ENCODE measurements at regions of chr12 and their contacts with region 1.

Region 1: DNA sequence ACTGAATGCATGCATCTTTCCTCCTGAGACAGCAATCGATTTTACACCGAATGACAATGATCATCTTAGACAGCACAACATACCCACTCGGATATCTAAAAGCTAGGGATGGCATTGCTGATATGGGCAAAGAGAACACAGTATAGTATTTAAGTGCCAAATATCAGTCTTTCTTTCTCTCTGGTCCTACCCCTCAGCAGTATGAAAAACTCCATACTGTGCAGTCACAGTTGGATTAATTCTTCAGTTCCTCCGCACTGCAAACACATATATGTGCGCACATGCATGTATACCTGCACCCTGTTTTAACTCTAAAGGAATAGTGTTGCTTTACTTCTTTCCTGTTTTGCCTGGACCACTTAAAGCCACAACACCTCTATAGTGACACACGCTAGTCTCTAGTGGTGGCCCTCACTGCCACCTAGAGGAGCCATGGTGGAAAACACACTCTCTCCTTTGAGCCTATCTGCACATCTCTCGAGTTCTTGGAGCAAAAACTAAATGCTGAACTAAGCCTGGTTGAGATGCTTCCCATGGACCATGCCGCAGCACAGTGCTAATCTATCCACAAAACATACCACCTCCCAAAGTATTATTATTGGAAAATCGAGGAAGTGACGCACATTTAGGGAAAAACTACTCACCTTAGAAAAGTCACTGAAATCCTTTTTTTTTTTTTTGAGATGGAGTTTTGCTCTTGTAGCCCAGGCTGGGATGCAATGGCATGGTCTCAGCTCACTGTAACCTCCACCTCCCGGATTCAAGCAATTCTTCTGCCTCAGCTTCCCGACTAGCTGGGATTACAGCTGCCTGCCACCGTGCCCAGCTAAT is 11.9 kb downstream of the TMEM52B start:
- DNase-seq: peak; percentile 18
- H3K4me3 Mint-ChIP-seq: no peak overlapping the region
- H3K27ac Mint-ChIP-seq: no peak overlapping the region
- H3K4me1 Mint-ChIP-seq: peaks cover 2% of the 10 kb centered on the region
- H3K27me3 Mint-ChIP-seq: peaks cover 35% of the 10 kb centered on the region

Region 2: DNA sequence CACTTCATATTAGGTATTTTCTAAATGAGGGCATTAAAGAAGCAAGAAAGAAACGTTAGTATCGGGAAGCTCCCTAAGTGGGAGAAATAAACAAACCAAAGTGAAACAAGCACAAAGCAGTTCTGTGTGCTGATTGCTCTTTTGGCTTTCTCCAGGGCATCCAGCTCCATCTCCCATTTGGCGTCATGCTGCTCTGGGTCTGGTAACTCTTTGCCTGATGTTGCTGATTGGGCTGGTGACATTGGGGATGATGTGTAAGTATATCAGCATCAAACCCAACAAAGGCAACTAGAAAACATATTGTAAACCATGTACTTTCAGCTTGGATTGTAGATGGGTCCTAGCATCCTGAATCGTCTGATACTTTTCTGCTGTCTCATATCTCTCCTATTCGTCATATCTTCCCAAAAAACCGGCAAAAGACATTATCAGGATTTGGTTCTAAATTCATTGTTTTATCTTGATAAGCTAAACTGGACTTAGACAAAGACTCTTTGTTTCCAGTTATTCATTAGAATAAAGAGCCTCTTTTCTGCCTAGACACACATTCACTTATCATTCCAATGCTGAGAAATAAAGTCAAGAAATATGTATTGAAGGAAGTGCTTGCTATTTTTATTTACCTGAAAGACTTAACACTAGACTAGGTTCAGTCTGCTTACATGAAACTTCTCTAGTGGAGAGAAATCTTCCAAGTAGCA is 178.0 kb before region 1 on chr12:
- intact Hi-C with region 1: loop called (anchors 5 kb)
- DNase-seq: no peak
- H3K4me3 Mint-ChIP-seq: no peak overlapping the region
- H3K27ac Mint-ChIP-seq: no peak overlapping the region
- H3K4me1 Mint-ChIP-seq: peaks cover 6% of the 10 kb centered on the region
- H3K27me3 Mint-ChIP-seq: peaks cover 40% of the 10 kb centered on the region

Region 3: GRCh38 chr12:10220398-10221077 is 29.8 kb after region 1 on chr12:
- intact Hi-C with region 1: no loop called
- DNase-seq: no peak
- H3K4me3 Mint-ChIP-seq: no peak overlapping the region
- H3K27ac Mint-ChIP-seq: no peak overlapping the region
- H3K4me1 Mint-ChIP-seq: peaks cover 8% of the 10 kb centered on the region
- H3K27me3 Mint-ChIP-seq: peaks cover under 1% of the 10 kb centered on the region